AG04449 (cell line): ENCODE measurements at regions of chr11 and their contacts with region 1.

Region 1: GRCh38 chr11:64846998-64847666 is 2.7 kb upstream of the CDC42BPG start:
- DNase-seq: no peak
- H3K4me3 ChIP-seq: no peak overlapping the region
- CTCF ChIP-seq: peak; percentile 93

Region 2: DNA sequence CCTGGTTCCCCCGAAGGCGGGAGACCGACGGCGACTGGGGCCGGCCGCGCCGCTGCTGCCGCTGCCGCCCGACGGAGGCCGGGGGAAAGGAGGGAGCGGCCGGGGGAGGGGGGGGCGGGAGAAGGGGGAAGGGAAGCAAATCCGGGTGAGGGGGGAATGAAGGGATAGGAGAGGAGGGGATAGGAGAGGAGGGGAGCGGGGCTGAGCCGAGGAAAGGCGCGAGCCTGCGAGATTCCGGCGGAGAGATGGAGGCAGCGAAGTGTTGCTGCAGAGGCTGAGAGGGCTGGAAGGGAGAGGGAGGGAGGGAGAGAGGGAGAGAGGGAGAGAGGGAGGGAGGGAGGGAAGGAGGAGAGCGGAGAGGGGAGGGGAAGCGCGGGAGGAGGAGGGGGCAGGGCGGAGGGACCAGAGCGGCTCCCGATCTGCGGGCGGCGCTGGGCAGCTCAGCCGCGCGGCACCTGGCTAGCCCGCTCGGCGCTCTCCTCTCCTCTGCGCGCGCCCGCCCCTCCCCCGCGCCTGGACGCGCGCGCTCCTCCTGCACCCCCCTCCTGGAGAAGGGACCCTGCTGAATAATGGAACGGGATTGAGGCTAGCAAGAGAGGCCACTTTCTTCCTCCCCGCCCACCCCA is 203.8 kb before region 1 on chr11:
- CTCF ChIA-PET with region 1: no interaction called
- POLR2A ChIA-PET with region 1: no interaction called
- DNase-seq: no peak
- H3K4me3 ChIP-seq: no peak overlapping the region
- CTCF ChIP-seq: no peak

Region 3: GRCh38 chr11:64834723-64835620 is 12.2 kb before region 1 on chr11:
- CTCF ChIA-PET with region 1: interaction called, 19 read pairs
- POLR2A ChIA-PET with region 1: no interaction called
- DNase-seq: no peak
- H3K4me3 ChIP-seq: no peak overlapping the region
- CTCF ChIP-seq: no peak

Region 4: GRCh38 chr11:64878494-64879243 is 31.5 kb after region 1 on chr11 and contains the start of gene EHD1:
- CTCF ChIA-PET with region 1: interaction called, 1,375 read pairs
- POLR2A ChIA-PET with region 1: interaction called, 31 read pairs
- DNase-seq: peak; percentile 66
- H3K4me3 ChIP-seq: peak within 1 kb of the TSS; percentile 99
- CTCF ChIP-seq: peak; percentile 85

Region 5: DNA sequence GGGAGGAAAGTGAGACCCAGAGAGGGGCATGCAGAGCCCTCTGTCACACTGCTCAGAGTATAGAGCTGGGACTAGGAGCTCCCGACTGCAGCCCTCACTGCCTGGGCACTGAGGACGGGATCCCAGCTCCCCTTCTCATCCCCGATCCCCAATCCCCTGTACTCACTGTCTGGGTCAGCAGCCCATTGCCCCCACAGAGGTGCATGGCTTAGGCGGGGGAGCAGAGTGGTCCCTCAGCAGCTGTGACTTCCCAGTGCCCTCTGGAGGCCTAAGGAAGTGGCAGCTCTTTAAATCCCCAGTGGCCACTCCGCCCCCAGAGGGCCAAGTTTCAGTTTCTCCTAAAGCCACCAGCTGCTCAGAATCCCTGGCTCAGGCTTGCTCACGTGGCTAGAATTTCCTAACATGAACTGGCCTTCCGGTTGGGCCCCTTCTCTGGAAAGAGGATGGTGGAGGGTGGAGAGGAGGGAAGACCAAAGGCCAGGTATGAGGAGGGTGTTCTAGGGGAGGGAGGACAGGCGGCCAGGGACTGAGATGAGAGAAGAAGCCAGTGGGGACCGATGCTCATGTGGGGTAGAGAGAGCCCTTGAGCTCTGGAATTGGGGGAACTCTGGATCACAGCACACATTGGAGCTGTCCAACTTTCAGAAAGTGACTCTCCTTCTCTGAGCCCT is 149.7 kb after region 1 on chr11 and contains the start of gene BATF2:
- CTCF ChIA-PET with region 1: interaction called, 13 read pairs
- POLR2A ChIA-PET with region 1: no interaction called
- DNase-seq: no peak
- H3K4me3 ChIP-seq: peak within 1 kb of the TSS; percentile 40
- CTCF ChIP-seq: peak; percentile 52